PC-9 (cell line): ENCODE measurements at regions of chr15 and their contacts with region 1.

Region 1: DNA sequence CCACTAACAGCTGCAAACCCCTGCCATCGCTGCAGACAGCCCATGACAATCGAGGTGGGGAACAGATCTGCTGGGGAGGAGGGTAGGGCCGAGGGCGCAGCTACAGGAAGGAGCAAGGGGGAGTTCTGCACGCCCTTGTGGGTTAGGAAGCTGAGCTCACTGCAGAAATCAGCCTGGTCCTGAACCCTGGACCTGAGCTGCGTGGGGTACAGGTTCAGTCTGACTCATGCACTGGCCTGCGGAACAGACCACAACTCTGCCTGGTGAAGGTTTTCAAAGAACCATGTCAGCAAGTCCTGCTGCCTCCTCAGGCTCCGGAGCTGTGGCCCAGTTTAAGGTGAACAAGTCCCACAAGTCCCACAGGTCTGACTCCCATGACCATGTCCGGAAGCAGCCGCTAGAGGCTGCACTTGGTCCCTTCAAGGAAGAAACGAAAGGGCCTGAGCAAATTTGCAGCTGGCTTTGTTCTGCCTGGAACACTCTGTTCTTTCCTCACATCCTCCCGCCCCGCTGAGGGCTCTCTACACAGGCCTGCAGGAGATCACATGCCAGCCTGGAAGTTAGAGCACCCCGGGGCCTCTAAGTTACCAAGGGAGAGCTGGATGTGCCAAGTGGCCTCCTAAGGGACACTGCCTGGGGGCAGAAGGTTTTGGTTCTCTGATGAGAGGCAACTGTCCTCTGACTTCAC is 49.4 kb upstream of the AKAP13 start:
- DNase-seq: peak; percentile 78
- H3K4me3 ChIP-seq: no peak overlapping the region
- H3K27ac ChIP-seq: no peak overlapping the region
- H3K4me1 ChIP-seq: peaks cover 13% of the 10 kb centered on the region
- H3K27me3 ChIP-seq: no peaks in the 10 kb centered on the region
- CTCF ChIP-seq: peak; percentile 83

Region 2: GRCh38 chr15:85412956-85413854 is 82.2 kb after region 1 on chr15:
- CTCF ChIA-PET with region 1: interaction called, 14 read pairs
- POLR2A ChIA-PET with region 1: no interaction called
- intact Hi-C with region 1: loop called (anchors 2 kb)
- DNase-seq: peak; percentile 59 to 90
- H3K4me3 ChIP-seq: no peak overlapping the region
- H3K27ac ChIP-seq: peak overlapping the region; percentile 98
- H3K4me1 ChIP-seq: peaks cover 46% of the 10 kb centered on the region
- H3K27me3 ChIP-seq: no peaks in the 10 kb centered on the region
- CTCF ChIP-seq: no peak

Region 3: DNA sequence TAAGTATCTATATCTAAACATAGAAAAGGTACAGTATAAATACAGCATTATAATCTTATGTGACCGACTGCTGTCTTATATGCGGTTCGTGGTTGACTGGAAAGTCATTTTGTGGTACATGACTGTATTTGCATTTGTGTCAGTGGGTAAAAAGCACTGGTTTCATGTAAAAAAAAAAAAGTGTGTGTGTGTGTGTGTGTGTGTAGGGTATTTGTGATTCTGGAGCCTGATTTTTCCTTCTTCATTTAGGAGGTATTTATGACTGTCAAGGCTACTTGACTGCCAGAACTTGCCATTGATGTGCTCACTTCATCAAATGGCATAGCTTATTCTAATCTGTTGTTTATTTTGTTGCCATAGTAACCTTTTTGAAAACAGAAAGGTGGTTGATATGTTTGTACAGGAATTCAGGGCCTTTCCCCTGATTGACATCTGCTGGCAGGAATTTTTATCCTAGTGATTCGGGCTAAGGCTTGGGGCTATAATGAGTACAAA is 112.6 kb after region 1 on chr15:
- CTCF ChIA-PET with region 1: interaction called, 22 read pairs
- POLR2A ChIA-PET with region 1: no interaction called
- intact Hi-C with region 1: no loop called
- DNase-seq: peak; percentile 55 to 94
- H3K4me3 ChIP-seq: no peak overlapping the region; the same call in 1 of the 2 replicates
- H3K27ac ChIP-seq: peak overlapping the region; percentile 57
- H3K4me1 ChIP-seq: peaks cover 34% of the 10 kb centered on the region
- H3K27me3 ChIP-seq: no peaks in the 10 kb centered on the region
- CTCF ChIP-seq: no peak; the same call in 1 of the 2 replicates

Region 4: DNA sequence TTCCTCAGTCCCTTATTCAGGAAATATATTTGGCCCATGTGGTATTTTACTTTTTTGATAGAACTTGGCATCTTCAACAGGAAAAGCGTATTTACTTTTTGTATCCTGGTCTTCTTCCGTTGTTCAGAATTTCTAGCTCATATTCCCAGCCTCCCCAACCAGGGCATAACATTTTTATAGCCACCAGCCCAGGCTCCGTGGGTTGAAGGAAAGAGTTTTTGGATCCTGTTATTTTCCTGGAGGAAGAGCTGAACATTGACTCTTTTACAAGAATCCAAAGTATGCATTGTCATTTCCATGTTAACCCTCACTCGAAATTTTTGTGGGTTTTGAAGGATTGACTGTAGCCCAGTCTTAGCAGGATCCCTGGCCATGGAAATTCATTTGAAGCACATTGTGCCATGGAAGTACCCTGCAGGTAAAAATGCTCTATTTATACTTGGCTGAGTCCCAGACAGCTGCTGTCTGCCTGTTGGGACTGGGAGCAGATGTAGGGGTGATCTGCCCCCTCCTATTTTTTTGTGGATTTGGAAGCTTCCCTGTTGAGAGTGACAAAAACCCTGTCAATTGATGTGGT is 148.1 kb after region 1 on chr15:
- CTCF ChIA-PET with region 1: no interaction called
- POLR2A ChIA-PET with region 1: no interaction called
- intact Hi-C with region 1: loop called (anchors 2 kb)
- DNase-seq: peak in 1 of 2 experiments; percentile 11
- H3K4me3 ChIP-seq: no peak overlapping the region
- H3K27ac ChIP-seq: no peak overlapping the region; the same call in 1 of the 2 replicates
- H3K4me1 ChIP-seq: 0 out of 2 replicates have a peak, but pooled peaks cover 11% of the 10 kb centered on the region
- H3K27me3 ChIP-seq: no peaks in the 10 kb centered on the region
- CTCF ChIP-seq: no peak

Region 5: GRCh38 chr15:85504749-85505676 is 174.0 kb after region 1 on chr15:
- CTCF ChIA-PET with region 1: no interaction called
- POLR2A ChIA-PET with region 1: no interaction called
- intact Hi-C with region 1: loop called (anchors 2 kb)
- DNase-seq: peak; percentile 11 to 38
- H3K4me3 ChIP-seq: no peak overlapping the region
- H3K27ac ChIP-seq: no peak overlapping the region
- H3K4me1 ChIP-seq: no peaks in the 10 kb centered on the region
- H3K27me3 ChIP-seq: no peaks in the 10 kb centered on the region
- CTCF ChIP-seq: peak; percentile 70

Region 6: GRCh38 chr15:86929461-86929860 is 1598.4 kb after region 1 on chr15:
- CTCF ChIA-PET with region 1: no interaction called
- POLR2A ChIA-PET with region 1: no interaction called
- intact Hi-C with region 1: no loop called
- DNase-seq: no peak
- H3K4me3 ChIP-seq: no peak overlapping the region
- H3K27ac ChIP-seq: no peak overlapping the region
- H3K4me1 ChIP-seq: no peaks in the 10 kb centered on the region
- H3K27me3 ChIP-seq: no peaks in the 10 kb centered on the region
- CTCF ChIP-seq: no peak